Aorta (tissue), 5 donors: ENCODE measurements at regions of chr3 and their contacts with region 1.

Region 1: DNA sequence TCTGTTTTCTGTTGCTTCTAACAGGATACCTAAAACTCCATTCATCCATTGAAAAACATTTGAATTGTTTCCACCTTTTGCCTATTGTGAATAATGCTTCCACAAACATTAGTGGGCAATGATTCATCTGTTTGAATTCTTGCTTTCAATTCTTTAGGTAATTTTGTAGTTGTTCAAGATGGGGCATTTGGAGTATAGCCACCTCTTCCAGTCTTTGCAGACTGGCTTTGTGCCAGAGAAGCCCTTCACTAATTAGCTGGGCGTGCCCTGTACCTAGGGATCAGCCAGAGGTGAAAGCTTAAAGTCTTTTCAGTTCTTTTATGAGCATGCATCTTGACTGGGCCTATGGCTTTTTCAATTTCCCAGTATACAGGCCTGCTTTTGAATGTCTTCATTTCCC is 10.9 kb downstream of the RTP1 start:
- DNase-seq: no peak
- ATAC-seq: no peak
- H3K4me3 ChIP-seq: no peak overlapping the region
- H3K27ac ChIP-seq: peak overlapping the region; percentile 11 to 43
- H3K4me1 ChIP-seq: peaks cover 13 to 15% of the 10 kb centered on the region in 2 donors
- H3K27me3 ChIP-seq: no peaks in the 10 kb centered on the region

Region 2: DNA sequence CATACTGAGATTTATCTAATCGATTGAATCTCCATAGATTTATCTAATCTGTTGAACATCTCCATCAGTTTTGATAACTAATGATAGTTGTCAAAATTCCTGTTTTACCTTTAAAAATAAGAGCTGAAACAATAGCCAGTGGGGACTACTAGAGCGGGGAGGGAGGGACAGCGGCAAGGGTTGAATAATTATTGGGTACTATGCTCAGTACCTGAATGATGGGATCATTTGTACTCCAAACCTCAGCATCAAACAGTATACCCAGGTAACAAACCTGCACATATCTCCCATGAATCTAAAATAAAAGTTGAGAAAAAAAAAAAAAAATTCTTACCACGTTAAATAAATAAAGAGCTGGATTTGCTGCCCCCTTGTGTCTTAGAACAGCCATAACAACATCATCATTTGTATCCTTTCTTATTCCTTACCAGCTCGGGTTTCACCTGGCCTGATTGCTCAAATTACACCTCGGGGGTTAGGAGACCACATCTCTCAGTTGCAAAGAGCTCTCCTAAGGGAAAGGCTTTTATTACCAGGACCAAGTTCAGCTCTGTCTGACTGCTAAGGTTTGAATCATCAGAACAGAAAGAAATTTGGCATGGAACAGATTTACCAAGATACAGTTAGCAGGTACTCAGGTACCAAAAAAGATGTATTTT is 43.1 kb before region 1 on chr3:
- intact Hi-C with region 1: no loop called
- DNase-seq: no peak
- ATAC-seq: peak; percentile 58
- H3K4me3 ChIP-seq: no peak overlapping the region
- H3K27ac ChIP-seq: no peak overlapping the region
- H3K4me1 ChIP-seq: peaks cover 0 to 3% of the 10 kb centered on the region in 2 donors
- H3K27me3 ChIP-seq: no peaks in the 10 kb centered on the region

Region 3: GRCh38 chr3:187193181-187193580 is 15.0 kb before region 1 on chr3:
- intact Hi-C with region 1: loop called in 1 of 2 experiments (anchors 2 kb)
- DNase-seq: no peak
- ATAC-seq: no peak
- H3K4me3 ChIP-seq: no peak overlapping the region
- H3K27ac ChIP-seq: peak overlapping the region in 1 of 2 donors; percentile 22
- H3K4me1 ChIP-seq: peaks cover 1 to 3% of the 10 kb centered on the region in 2 donors
- H3K27me3 ChIP-seq: no peaks in the 10 kb centered on the region